ENCODE measurements at regions of chr14 and their contacts with region 1.

Region 1: DNA sequence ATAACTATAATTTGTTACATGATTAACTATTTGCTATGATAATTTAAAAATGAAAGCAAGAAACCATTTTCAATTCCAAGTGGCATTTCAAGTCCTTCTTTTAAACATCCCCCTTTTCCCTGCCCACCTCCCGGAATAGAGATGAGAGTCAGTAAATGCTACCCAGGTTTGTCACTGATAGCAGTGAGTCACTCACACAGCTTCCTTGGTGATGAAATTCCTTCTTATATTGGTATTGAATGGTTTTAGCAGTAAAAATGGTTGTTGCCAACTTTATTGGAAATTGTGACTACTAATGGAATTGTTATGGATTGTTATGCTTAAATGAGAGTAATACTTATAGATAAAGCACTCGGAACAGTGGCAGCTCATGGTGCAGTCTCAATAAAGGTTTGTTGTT is 90.5 kb downstream of the PPM1A start:
- DNase-seq: no peak
- H3K4me3 Mint-ChIP-seq: no peak overlapping the region
- H3K27ac Mint-ChIP-seq: no peak overlapping the region
- H3K4me1 Mint-ChIP-seq: no peaks in the 10 kb centered on the region
- H3K27me3 Mint-ChIP-seq: peaks cover 6% of the 10 kb centered on the region

Region 2: DNA sequence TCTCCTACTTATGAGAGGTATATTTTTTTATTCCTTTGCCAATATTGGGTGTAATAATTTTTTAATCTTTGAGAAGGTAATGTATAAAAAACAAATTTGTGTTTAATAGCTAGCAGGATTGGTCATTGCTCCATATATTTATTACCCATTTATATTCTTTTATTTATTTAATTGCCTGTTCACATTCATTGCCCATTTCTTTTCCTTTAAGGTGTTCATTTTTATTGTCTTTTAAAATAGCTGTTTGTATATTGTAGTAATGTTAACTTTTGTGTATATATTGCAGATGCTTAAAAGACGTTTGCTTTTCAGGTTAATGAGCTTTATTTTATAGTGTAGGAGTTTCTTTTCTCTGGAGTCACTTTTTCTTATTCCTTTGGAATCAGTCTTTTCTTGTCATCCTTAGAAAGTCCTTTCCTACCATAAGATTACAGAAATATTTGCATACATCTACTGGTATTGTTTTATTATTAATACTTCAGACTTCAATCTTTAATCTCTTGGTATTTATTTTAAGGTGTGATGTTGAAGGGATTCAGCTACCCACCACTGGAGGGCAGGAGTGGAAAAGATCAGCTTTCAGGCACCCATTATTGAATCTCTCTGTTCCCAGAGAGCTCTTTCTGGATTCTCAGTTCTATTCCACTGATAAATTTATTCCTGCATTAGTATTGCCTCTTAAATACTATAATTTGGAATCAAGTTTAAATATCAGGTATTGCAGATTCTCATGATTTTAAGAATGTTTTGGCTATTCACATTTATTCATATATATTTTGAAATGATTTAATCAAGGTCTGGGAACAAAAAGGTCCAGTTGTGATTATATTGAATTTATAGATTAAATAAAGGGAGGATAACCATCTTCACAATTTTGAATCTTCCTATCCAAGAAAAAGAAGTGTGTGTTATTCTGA is 73.3 kb before region 1 on chr14:
- CTCF ChIA-PET with region 1: no interaction called
- intact Hi-C with region 1: no loop called
- DNase-seq: peak; percentile 34
- H3K4me3 Mint-ChIP-seq: no peak overlapping the region
- H3K27ac Mint-ChIP-seq: no peak overlapping the region
- H3K4me1 Mint-ChIP-seq: peaks cover 16% of the 10 kb centered on the region
- H3K27me3 Mint-ChIP-seq: no peaks in the 10 kb centered on the region

Region 3: GRCh38 chr14:60349663-60350365 is 10.2 kb after region 1 on chr14:
- CTCF ChIA-PET with region 1: interaction called, 15 read pairs
- intact Hi-C with region 1: no loop called
- DNase-seq: peak; percentile 51
- H3K4me3 Mint-ChIP-seq: no peak overlapping the region
- H3K27ac Mint-ChIP-seq: no peak overlapping the region
- H3K4me1 Mint-ChIP-seq: no peaks in the 10 kb centered on the region
- H3K27me3 Mint-ChIP-seq: peaks cover 3% of the 10 kb centered on the region

Region 4: GRCh38 chr14:60482743-60483142 is 143.2 kb after region 1 on chr14:
- CTCF ChIA-PET with region 1: no interaction called
- intact Hi-C with region 1: no loop called
- DNase-seq: no peak
- H3K4me3 Mint-ChIP-seq: no peak overlapping the region
- H3K27ac Mint-ChIP-seq: no peak overlapping the region
- H3K4me1 Mint-ChIP-seq: peaks cover 2% of the 10 kb centered on the region
- H3K27me3 Mint-ChIP-seq: peaks cover 34% of the 10 kb centered on the region